HEK293 (cell line): ENCODE measurements at regions of chr6 and their contacts with region 1.

Region 1: DNA sequence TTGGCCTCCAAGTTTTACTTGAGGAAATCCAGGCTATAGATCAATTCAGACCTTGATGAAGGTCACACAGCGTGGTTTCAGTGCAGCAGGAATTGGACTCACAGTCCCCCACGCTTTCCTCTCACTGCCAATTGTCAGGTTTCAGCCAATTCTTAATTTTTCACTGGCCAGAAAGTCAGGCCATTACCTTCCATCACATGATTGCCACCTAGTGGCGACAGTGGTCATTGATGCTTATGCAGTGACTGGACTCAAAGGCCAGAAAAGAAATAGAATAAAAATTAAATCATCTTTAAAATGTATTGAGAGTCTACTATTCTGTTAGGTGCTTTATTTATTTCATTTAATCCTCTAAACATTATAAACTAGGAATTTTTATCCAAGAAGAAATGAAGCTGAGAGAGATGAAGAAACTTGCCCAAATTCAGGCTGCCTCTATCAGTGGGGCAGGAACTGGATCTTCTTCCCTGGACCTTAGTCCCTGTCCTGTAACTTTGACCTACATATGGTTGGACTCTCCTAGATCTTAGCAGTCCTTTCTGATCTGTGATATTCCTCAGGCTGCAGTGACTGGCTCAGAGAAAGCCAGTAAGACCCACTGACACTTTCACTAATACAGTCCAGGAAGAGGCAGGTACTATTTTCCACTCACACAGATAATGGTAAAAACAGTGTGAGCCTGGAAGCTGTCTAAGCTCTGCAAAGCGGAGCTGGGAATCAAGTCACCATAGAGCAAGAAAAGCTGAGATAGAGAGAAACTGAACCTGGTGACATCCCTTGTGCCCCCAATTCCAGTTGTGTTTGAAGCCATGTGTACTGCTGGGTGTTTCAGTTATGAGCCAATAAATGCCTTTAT is 133.3 kb downstream of the ELOVL4 start:
- H3K4me3 ChIP-seq: no peak overlapping the region
- H3K27ac ChIP-seq: no peak overlapping the region
- H3K4me1 ChIP-seq: no peaks in the 10 kb centered on the region
- CTCF ChIP-seq: peak; percentile 53

Region 2: GRCh38 chr6:79665725-79666551 is 148.1 kb before region 1 on chr6:
- CTCF ChIA-PET with region 1: no interaction called
- POLR2A ChIA-PET with region 1: no interaction called
- H3K4me3 ChIP-seq: no peak overlapping the region
- H3K27ac ChIP-seq: no peak overlapping the region
- H3K4me1 ChIP-seq: no peaks in the 10 kb centered on the region; the same call in 1 of the 2 replicates
- CTCF ChIP-seq: no peak

Region 3: GRCh38 chr6:79777713-79778579 is 36.1 kb before region 1 on chr6:
- CTCF ChIA-PET with region 1: interaction called, 17 read pairs
- POLR2A ChIA-PET with region 1: no interaction called
- H3K4me3 ChIP-seq: peak overlapping the region; percentile 20
- H3K27ac ChIP-seq: no peak overlapping the region
- H3K4me1 ChIP-seq: no peaks in the 10 kb centered on the region
- CTCF ChIP-seq: peak; percentile 93

Region 4: GRCh38 chr6:79789843-79790242 is 24.2 kb before region 1 on chr6:
- CTCF ChIA-PET with region 1: interaction called, 16 read pairs
- POLR2A ChIA-PET with region 1: no interaction called
- H3K4me3 ChIP-seq: no peak overlapping the region
- H3K27ac ChIP-seq: no peak overlapping the region
- H3K4me1 ChIP-seq: no peaks in the 10 kb centered on the region
- CTCF ChIP-seq: no peak

Region 5: DNA sequence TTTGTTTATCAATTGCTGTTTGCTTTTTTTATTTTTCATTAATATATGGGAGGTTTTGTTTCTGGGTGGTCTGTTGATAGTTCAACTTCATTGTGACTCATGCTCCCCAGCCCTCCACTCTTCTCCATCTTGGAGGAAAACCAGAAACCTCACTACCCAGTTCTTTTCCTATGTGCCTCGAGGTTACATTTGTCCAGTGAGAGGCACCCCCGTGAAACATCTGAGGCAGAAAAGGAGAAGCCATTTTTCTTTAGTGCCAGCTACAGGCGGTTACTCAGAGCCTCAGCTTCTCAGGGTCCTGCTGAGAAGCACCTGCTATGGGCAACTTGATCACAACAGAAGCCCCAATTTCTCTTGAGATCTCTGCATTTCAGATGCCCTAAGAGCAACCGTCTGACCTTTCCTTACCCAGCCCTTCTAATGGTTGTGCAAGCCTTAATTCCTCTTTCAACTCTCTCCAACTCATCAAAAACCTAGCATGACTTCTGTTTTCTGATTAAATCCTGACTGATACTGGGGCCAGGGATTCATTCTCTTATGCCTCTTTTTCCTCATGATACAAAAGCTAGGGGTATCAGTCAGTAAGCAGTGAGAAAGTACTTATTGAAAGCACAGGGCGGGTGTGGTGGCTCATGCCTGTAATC is 11.3 kb before region 1 on chr6:
- CTCF ChIA-PET with region 1: interaction called, 14 read pairs
- POLR2A ChIA-PET with region 1: no interaction called
- H3K4me3 ChIP-seq: no peak overlapping the region
- H3K27ac ChIP-seq: no peak overlapping the region
- H3K4me1 ChIP-seq: no peaks in the 10 kb centered on the region
- CTCF ChIP-seq: no peak

Region 6: GRCh38 chr6:79824202-79824601 is 10.1 kb after region 1 on chr6:
- CTCF ChIA-PET with region 1: interaction called, 26 read pairs
- POLR2A ChIA-PET with region 1: no interaction called
- H3K4me3 ChIP-seq: no peak overlapping the region
- H3K27ac ChIP-seq: no peak overlapping the region
- H3K4me1 ChIP-seq: no peaks in the 10 kb centered on the region
- CTCF ChIP-seq: no peak